Sigmoid colon (tissue), 7 donors: ENCODE measurements at regions of chr9 and their contacts with region 1.

Region 1: GRCh38 chr9:95793924-95794828 is 81.3 kb upstream of the ERCC6L2 start:
- DNase-seq: no peak
- H3K4me3 ChIP-seq: no peak overlapping the region
- H3K27ac ChIP-seq: peak overlapping the region in 2 of 4 donors; percentile 2 to 41
- H3K4me1 ChIP-seq: peaks cover 0 to 18% (median 11%) of the 10 kb centered on the region in 4 donors
- H3K27me3 ChIP-seq: no peaks in the 10 kb centered on the region
- CTCF ChIP-seq: no peak
- EP300 ChIP-seq: no peak
- POLR2A ChIP-seq: no peak

Region 2: DNA sequence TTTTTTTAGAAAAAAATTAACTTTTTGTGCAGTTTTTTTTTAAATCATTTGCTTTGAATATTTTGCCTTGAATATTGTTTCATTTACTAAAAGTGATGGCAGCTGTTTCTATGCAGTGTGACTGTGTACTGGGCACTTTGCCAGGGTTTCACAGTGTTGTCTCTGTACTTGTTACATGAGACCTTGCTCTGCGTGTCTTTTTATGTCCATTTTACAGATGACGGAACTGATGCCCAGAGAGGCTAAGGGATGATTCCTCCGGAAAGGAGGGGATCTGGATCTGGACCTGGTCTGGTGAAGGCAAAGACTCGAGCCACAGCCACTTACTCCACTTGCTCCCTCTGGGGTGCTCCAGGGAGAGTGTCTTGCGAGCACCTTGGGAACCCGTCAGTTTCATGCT is 152.6 kb before region 1 on chr9:
- intact Hi-C with region 1: no loop called
- DNase-seq: no peak
- H3K4me3 ChIP-seq: no peak overlapping the region
- H3K27ac ChIP-seq: no peak overlapping the region
- H3K4me1 ChIP-seq: no peaks in the 10 kb centered on the region
- H3K27me3 ChIP-seq: no peaks in the 10 kb centered on the region
- CTCF ChIP-seq: no peak
- EP300 ChIP-seq: no peak
- POLR2A ChIP-seq: no peak

Region 3: DNA sequence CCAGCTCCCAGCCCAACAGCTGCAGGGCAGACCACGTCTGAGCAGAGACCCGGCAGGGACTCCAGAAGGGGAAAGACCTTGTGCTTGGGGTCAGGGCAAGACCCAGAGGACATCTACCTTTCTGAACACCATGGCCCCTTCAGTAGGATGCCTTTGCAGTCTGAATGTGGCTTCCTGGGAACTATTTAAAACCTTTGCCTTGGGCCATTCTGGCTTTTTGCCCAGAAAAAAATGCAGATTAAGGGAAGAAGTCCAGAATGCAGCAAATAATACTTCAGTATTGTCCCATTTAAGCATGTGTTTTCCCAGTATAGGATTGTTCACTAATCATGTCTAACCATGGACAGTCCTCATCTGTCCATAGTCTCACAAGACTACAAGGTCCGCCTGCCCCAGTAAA is 13.8 kb after region 1 on chr9:
- intact Hi-C with region 1: loop called (anchors 2 kb)
- DNase-seq: no peak
- H3K4me3 ChIP-seq: no peak overlapping the region
- H3K27ac ChIP-seq: peak overlapping the region; percentile 38 to 73 (median 66)
- H3K4me1 ChIP-seq: peaks cover 0 to 50% (median 26%) of the 10 kb centered on the region in 4 donors
- H3K27me3 ChIP-seq: no peaks in the 10 kb centered on the region
- CTCF ChIP-seq: no peak
- EP300 ChIP-seq: no peak
- POLR2A ChIP-seq: no peak